ENCODE measurements at regions of chr15 and their contacts with region 1.

Region 1: GRCh38 chr15:66472176-66472999 is 25.2 kb downstream of the SNAPC5 start:
- DNase-seq: peak; percentile 5 to 79 (median 47)
- ATAC-seq: peak; percentile 85 to 97 (median 90)
- H3K4me3 ChIP-seq: no peak overlapping the region
- H3K4me3 Mint-ChIP-seq: peak overlapping the region; percentile 53 to 75 (median 73)
- H3K27ac ChIP-seq: peak overlapping the region; percentile 75
- H3K27ac Mint-ChIP-seq: peak overlapping the region; percentile 86 to 96
- H3K4me1 ChIP-seq: peaks cover 11 to 26% of the 10 kb centered on the region in 2 experiments
- H3K4me1 Mint-ChIP-seq: peaks cover 41 to 58% (median 48%) of the 10 kb centered on the region in 3 donors
- H3K27me3 ChIP-seq: no peaks in the 10 kb centered on the region
- H3K27me3 Mint-ChIP-seq: no peaks in the 10 kb centered on the region

Region 2: GRCh38 chr15:66097151-66098021 is 375.0 kb before region 1 on chr15:
- CTCF ChIA-PET with region 1: no interaction called
- POLR2A ChIA-PET with region 1: no interaction called
- DNase-seq: no peak
- ATAC-seq: no peak
- H3K4me3 ChIP-seq: no peak overlapping the region
- H3K4me3 Mint-ChIP-seq: no peak overlapping the region
- H3K27ac ChIP-seq: no peak overlapping the region
- H3K27ac Mint-ChIP-seq: no peak overlapping the region
- H3K4me1 ChIP-seq: no peaks in the 10 kb centered on the region
- H3K4me1 Mint-ChIP-seq: no peaks in the 10 kb centered on the region
- H3K27me3 ChIP-seq: peaks cover 0 to 42% of the 10 kb centered on the region in 2 experiments
- H3K27me3 Mint-ChIP-seq: peaks cover 4 to 11% of the 10 kb centered on the region in 2 donors

Region 3: DNA sequence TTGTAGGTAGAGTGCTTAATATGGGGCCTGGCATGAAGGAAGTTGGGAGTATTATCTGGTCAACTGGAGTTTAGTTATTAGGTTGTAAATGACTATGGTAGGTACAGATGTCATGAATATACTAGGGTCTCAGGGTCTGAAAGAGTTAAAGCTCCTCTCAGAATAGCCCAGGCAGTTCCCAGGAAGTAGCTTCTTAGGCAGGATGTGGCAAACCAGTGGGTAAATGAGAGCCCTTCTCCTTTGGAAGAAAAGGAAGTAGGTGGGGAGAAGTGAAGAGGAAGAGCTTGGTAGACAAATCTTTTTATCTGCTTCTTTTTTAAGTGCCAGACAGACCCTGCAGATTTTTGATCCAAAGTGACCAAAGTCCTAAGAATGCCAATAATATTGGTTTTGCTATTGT is 61.2 kb before region 1 on chr15:
- CTCF ChIA-PET with region 1: interaction called, 3 to 12 read pairs
- POLR2A ChIA-PET with region 1: no interaction called
- DNase-seq: peak in 1 of 35 experiments; percentile 13
- ATAC-seq: peak; percentile 23 to 70 (median 49)
- H3K4me3 ChIP-seq: peak overlapping the region in 1 of 2 donors; percentile 35
- H3K4me3 Mint-ChIP-seq: peak overlapping the region; percentile 53 to 75 (median 54)
- H3K27ac ChIP-seq: peak overlapping the region; percentile 18
- H3K27ac Mint-ChIP-seq: peak overlapping the region; percentile 72 to 76
- H3K4me1 ChIP-seq: peaks cover 54 to 64% of the 10 kb centered on the region in 2 experiments
- H3K4me1 Mint-ChIP-seq: peaks cover 86 to 90% (median 90%) of the 10 kb centered on the region in 3 donors
- H3K27me3 ChIP-seq: no peaks in the 10 kb centered on the region
- H3K27me3 Mint-ChIP-seq: no peaks in the 10 kb centered on the region

Region 4: GRCh38 chr15:66417736-66418135 is 54.7 kb before region 1 on chr15:
- CTCF ChIA-PET with region 1: interaction called, 10 to 12 read pairs
- POLR2A ChIA-PET with region 1: no interaction called
- DNase-seq: no peak
- ATAC-seq: no peak
- H3K4me3 ChIP-seq: no peak overlapping the region
- H3K4me3 Mint-ChIP-seq: no peak overlapping the region
- H3K27ac ChIP-seq: no peak overlapping the region
- H3K27ac Mint-ChIP-seq: peak overlapping the region in 1 of 2 donors; percentile 61
- H3K4me1 ChIP-seq: peaks cover 10 to 12% of the 10 kb centered on the region in 2 experiments
- H3K4me1 Mint-ChIP-seq: peaks cover 62 to 69% (median 66%) of the 10 kb centered on the region in 3 donors
- H3K27me3 ChIP-seq: no peaks in the 10 kb centered on the region
- H3K27me3 Mint-ChIP-seq: no peaks in the 10 kb centered on the region

Region 5: GRCh38 chr15:66452971-66453580 is 19.3 kb before region 1 on chr15:
- CTCF ChIA-PET with region 1: no interaction called
- POLR2A ChIA-PET with region 1: no interaction called
- DNase-seq: no peak
- ATAC-seq: no peak
- H3K4me3 ChIP-seq: no peak overlapping the region
- H3K4me3 Mint-ChIP-seq: no peak overlapping the region
- H3K27ac ChIP-seq: no peak overlapping the region
- H3K27ac Mint-ChIP-seq: peak overlapping the region in 1 of 2 donors; percentile 44
- H3K4me1 ChIP-seq: no peaks in the 10 kb centered on the region
- H3K4me1 Mint-ChIP-seq: peaks cover 5 to 7% (median 6%) of the 10 kb centered on the region in 3 donors
- H3K27me3 ChIP-seq: no peaks in the 10 kb centered on the region
- H3K27me3 Mint-ChIP-seq: no peaks in the 10 kb centered on the region

Region 6: GRCh38 chr15:66497502-66498455 is 25.4 kb after region 1 on chr15 and contains the start of gene SNAPC5:
- CTCF ChIA-PET with region 1: interaction called, 5 to 40 read pairs
- POLR2A ChIA-PET with region 1: no interaction called
- DNase-seq: peak; percentile 94 to 99 (median 97)
- ATAC-seq: peak; percentile 90 to 93 (median 92)
- H3K4me3 ChIP-seq: peak within 1 kb of the TSS; percentile 82 to 94
- H3K4me3 Mint-ChIP-seq: peak within 1 kb of the TSS; percentile 93 to 97 (median 96)
- H3K27ac ChIP-seq: peak within 1 kb of the TSS; percentile 89
- H3K27ac Mint-ChIP-seq: peak within 1 kb of the TSS; percentile 94 to 97
- H3K4me1 ChIP-seq: peaks cover 13 to 33% of the 10 kb centered on the region in 2 experiments
- H3K4me1 Mint-ChIP-seq: peaks cover 62 to 66% (median 62%) of the 10 kb centered on the region in 3 donors
- H3K27me3 ChIP-seq: no peaks in the 10 kb centered on the region
- H3K27me3 Mint-ChIP-seq: no peaks in the 10 kb centered on the region
- total RNA-seq, gene SNAPC5: 23.4 to 37.5 (median 34.0) TPM

Region 7: DNA sequence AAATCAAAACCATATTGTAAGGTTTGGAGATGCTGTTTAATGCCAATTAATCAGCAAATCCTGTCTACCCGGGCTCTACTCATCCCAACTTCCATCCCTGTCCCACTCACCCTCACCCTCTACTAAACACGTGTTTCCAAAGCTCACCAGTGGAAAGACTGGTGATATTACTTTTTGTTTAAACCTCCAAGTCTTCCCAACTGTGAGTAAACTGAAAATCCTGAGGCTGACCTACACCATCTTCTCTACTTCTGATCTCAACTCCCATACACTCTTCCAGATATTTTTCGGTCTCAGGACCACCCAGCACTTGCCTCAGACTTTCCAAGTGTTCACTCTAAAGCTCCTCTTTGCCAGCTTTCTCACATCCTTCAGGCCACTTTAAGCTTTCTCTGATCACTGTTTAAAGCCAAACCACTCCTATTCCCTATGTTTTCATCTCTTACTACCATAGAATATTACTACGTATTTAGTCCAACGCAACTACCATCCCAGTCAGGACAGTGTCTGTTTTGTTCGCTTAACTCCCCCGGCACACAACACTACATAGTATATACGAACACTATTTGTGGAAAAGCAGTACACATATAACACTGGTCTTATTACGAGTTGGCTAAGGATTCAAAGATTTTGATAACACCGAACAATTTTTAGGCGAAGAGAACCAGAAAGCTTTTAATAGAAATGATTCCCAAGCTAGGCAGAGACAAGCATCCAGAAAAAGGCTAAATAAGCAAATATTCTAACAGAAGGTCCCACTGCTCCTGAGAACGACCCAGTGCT is 31.6 kb after region 1 on chr15:
- CTCF ChIA-PET with region 1: interaction called, 5 to 40 read pairs
- POLR2A ChIA-PET with region 1: interaction called, 4 to 12 read pairs
- DNase-seq: no peak
- ATAC-seq: no peak
- H3K4me3 ChIP-seq: peak overlapping the region; percentile 88 to 99
- H3K4me3 Mint-ChIP-seq: peak overlapping the region; percentile 91 to 100 (median 99)
- H3K27ac ChIP-seq: peak overlapping the region; percentile 86
- H3K27ac Mint-ChIP-seq: peak overlapping the region; percentile 98
- H3K4me1 ChIP-seq: peaks cover 23 to 25% of the 10 kb centered on the region in 2 experiments
- H3K4me1 Mint-ChIP-seq: peaks cover 52 to 54% (median 52%) of the 10 kb centered on the region in 3 donors
- H3K27me3 ChIP-seq: no peaks in the 10 kb centered on the region
- H3K27me3 Mint-ChIP-seq: no peaks in the 10 kb centered on the region

Region 8: GRCh38 chr15:66603301-66604179 is 131.2 kb after region 1 on chr15:
- CTCF ChIA-PET with region 1: no interaction called
- POLR2A ChIA-PET with region 1: no interaction called
- DNase-seq: peak; percentile 12 to 77 (median 49)
- ATAC-seq: peak; percentile 59 to 70 (median 66)
- H3K4me3 ChIP-seq: no peak overlapping the region
- H3K4me3 Mint-ChIP-seq: no peak overlapping the region
- H3K27ac ChIP-seq: no peak overlapping the region
- H3K27ac Mint-ChIP-seq: no peak overlapping the region
- H3K4me1 ChIP-seq: peaks cover 0 to under 1% of the 10 kb centered on the region in 2 experiments
- H3K4me1 Mint-ChIP-seq: peaks cover under 1 to 2% (median 1%) of the 10 kb centered on the region in 3 donors
- H3K27me3 ChIP-seq: peaks cover 0 to 40% of the 10 kb centered on the region in 2 experiments
- H3K27me3 Mint-ChIP-seq: peaks cover 0 to 10% of the 10 kb centered on the region in 2 donors

Region 9: GRCh38 chr15:68229386-68230156 is 1757.2 kb after region 1 on chr15 and contains the start of gene CLN6:
- CTCF ChIA-PET with region 1: no interaction called
- POLR2A ChIA-PET with region 1: interaction called in 1 of 2 experiments, 12 read pairs
- DNase-seq: peak; percentile 62 to 86 (median 74)
- ATAC-seq: peak; percentile 85 to 95 (median 90)
- H3K4me3 ChIP-seq: peak within 1 kb of the TSS; percentile 73 to 79
- H3K4me3 Mint-ChIP-seq: peak within 1 kb of the TSS; percentile 77 to 94 (median 90)
- H3K27ac ChIP-seq: peak within 1 kb of the TSS; percentile 53
- H3K27ac Mint-ChIP-seq: peak within 1 kb of the TSS; percentile 86 to 90
- H3K4me1 ChIP-seq: peaks cover 7 to 31% of the 10 kb centered on the region in 2 experiments
- H3K4me1 Mint-ChIP-seq: peaks cover 28 to 39% (median 35%) of the 10 kb centered on the region in 3 donors
- H3K27me3 ChIP-seq: peaks cover 0 to 25% of the 10 kb centered on the region in 2 experiments
- H3K27me3 Mint-ChIP-seq: peaks cover 4 to 6% of the 10 kb centered on the region in 2 donors
- total RNA-seq, gene CLN6: 15.4 to 24.0 (median 17.9) TPM